OCI-LY7 (cell line): ENCODE measurements at regions of chr10 and their contacts with region 1.

Region 1: GRCh38 chr10:32980558-32981468 is 22.8 kb upstream of the ITGB1 start:
- DNase-seq: peak; percentile 90
- H3K4me3 ChIP-seq: peak overlapping the region; percentile 63
- H3K27ac ChIP-seq: peak overlapping the region; percentile 63
- H3K4me1 ChIP-seq: peaks cover 62% of the 10 kb centered on the region
- CTCF ChIP-seq: 0 out of 2 replicates have a peak, but pooled peaks have one; percentile 25

Region 2: DNA sequence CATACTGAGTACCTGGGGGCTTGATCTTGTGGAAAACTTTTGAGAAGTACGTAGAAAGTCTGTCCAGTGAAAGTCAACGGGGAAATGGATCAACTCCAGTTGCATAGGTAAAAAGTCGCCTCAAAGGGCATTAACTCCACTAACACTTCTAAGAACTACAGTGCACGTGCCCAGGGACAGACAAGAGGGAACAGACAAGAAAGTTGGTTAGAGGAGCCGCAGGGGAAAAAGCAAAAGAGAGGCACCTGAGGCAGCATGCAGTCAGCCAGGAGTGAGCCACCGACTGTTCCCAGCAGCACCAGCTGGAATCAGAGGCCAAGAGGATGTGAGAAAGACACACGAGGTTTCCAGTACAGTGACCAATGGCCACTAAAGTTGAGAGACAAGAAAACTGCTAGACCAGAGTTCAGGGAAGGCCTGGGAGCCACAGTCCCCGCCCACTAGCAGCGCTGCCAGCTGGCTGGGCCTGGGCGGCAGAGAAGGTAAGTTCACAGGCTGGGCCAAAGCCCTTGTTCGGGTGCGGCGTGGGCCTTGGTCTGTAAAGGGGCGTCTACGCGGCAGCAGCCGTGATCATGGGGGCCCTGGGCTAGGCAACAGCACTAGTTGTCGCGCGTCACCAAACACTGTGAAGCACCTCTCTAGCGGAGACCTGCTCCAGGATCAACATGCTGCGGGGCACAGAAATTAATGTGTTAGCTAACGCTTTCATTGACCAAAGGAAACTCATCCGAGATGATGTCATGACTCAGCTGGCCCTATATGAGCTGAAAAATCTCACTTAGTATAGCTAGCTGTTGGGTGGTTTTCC is 36.8 kb before region 1 on chr10:
- CTCF ChIA-PET with region 1: no interaction called
- POLR2A ChIA-PET with region 1: interaction called, 10 read pairs
- intact Hi-C with region 1: no loop called
- DNase-seq: no peak
- H3K4me3 ChIP-seq: peak overlapping the region; percentile 10
- H3K27ac ChIP-seq: peak overlapping the region; percentile 65
- H3K4me1 ChIP-seq: peaks cover 87% of the 10 kb centered on the region
- CTCF ChIP-seq: no peak

Region 3: DNA sequence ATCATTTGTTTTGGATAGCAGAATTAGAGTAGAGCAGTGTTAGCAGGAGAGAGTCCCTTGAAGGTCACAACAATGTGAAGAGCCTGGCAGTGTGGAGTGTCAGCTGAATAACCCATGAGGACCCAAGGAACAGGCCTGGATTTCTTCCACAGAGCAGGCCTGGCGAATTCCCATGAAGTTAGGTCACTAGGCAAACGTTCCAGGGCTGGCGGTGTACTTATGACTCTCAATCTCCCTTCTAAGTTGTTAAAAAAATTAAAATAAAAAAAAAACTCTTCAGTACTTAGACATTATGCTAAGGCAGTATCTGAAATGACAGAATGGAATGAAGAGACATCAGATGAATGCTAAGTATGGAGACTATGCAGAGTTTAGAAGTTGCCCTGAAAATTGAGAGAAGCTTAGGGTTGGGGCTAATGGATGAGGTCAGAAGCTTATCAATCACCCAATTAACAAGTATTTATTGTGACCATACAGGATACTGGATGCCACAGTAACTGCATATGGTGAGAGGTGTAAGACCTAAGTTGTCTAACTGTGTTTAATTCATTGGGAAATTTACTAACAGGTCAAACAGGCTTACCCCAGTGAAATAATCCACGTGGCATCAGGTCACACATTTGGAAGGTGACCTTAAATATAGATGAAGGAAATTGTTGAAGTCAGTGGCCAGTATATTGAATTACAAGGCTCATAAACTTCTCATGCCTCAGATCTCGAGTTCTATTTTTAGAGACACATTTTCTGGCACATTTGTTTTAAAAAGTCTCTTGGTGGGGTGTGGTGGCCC is 479.9 kb after region 1 on chr10:
- CTCF ChIA-PET with region 1: no interaction called
- POLR2A ChIA-PET with region 1: no interaction called
- intact Hi-C with region 1: no loop called
- DNase-seq: no peak
- H3K4me3 ChIP-seq: no peak overlapping the region
- H3K27ac ChIP-seq: no peak overlapping the region
- H3K4me1 ChIP-seq: no peaks in the 10 kb centered on the region
- CTCF ChIP-seq: no peak